ENCODE measurements at regions of chr2 and their contacts with region 1.

Region 1: GRCh38 chr2:48600204-48600813 is 17.3 kb upstream of the GTF2A1L start:
- DNase-seq: no peak

Region 2: GRCh38 chr2:48727565-48727964 is 127.3 kb after region 1 on chr2:
- intact Hi-C with region 1: loop called (anchors 5 kb)
- DNase-seq: no peak

Measured in cardiac septum (tissue), 1 donor.